IMR-90 (cell line): ENCODE measurements at regions of chr5 and their contacts with region 1.

Region 1: GRCh38 chr5:58460732-58461286 is 923 bp upstream of the PLK2 start:
- DNase-seq: peak; percentile 80
- ATAC-seq: peak; percentile 65
- H3K4me3 ChIP-seq: peak overlapping the region; percentile 85
- H3K27ac ChIP-seq: peak overlapping the region; percentile 77
- H3K4me1 ChIP-seq: no peaks in the 10 kb centered on the region; the same call in none of the 2 replicates
- H3K27me3 ChIP-seq: no peaks in the 10 kb centered on the region
- CTCF ChIP-seq: peak; percentile 88
- POLR2A ChIP-seq: no peak
- RAD21 ChIP-seq: peak; percentile 96

Region 2: DNA sequence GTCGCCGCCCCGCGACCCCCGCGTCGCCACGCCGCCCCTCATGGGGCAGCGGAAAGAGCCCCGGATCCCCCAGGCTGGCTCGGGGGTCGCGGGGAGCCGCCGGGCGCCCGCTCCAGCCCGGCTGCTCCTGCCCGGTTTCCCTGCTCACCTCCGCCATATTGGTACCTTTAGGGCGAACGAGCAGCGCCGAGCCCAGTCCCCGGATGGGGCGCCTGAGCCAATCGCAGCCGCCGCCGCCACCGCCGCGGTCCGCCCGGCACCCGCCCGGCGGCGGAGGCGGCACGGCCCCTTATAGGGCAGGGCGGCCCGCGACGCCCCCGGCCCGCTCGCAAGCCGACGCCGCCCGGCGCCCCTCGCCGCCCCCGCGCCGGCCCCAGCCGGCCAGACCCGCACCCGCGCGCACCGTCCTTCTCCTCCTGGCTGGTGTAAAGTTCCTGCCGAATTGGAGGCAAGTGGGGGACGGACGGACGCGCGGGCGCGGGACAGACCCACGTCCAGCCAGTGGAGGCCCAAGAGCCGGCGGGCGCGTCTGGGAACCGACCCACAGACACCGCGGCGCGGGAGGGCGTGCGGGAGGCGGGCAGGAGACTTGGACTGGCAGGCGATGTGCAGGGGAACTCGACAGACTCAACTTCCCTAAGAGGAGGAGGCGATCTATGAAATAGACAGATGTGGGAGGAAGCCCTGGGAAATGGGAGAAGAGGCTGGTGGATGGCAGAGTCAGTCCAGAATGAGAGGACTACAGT is 1508.7 kb before region 1 on chr5 and contains the start of gene MIER3:
- CTCF ChIA-PET with region 1: no interaction called
- POLR2A ChIA-PET with region 1: no interaction called
- dilution Hi-C with region 1: no loop called
- in situ Hi-C with region 1: no loop called
- intact Hi-C with region 1: loop called (anchors 5 kb)
- DNase-seq: peak; percentile 67
- ATAC-seq: peak; percentile 97
- H3K4me3 ChIP-seq: peak within 1 kb of the TSS; percentile 57
- H3K27ac ChIP-seq: peak within 1 kb of the TSS; percentile 70
- H3K4me1 ChIP-seq: peaks cover 2% of the 10 kb centered on the region; the same call in 1 of the 2 replicates
- H3K27me3 ChIP-seq: peaks cover 8% of the 10 kb centered on the region; the same call in 1 of the 2 replicates
- CTCF ChIP-seq: no peak
- POLR2A ChIP-seq: peak; percentile 76
- RAD21 ChIP-seq: no peak
- total RNA-seq, gene MIER3: 22.9 and 26.7 TPM in 2 replicates

Region 3: DNA sequence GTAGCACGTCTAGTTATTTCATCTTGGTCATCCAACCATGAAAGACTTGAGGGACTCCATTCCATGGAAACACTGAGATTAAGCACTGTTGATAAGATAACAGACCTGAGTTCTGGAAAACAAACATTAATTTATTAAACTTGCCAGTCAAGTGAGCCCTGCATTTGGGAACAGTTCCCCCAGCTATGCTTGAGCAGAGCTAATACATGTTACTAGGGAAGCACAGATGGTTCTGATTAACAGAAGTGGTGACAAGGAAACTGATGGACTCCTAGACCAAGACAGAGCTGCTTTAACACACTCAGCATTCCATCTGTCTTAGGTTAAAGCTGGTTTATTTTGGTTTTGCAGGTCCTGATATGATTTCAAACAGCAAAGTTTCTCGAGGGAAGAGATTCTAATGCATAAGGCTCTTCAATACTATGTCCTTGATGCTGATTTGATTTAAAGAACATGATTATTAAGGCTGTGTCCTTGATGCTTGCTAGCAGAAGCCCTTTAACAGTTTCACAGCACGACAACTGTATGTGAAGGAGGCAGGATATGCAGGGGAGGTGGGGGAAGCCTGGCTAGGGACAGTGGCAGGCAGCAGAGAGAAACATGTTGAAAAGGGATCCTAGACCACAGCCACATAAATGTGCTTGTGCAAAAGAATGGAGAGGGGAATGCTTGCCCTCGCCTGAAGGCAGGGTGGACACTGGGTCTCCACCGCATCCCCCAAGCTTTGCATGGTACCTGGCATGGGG is 1044.4 kb before region 1 on chr5:
- CTCF ChIA-PET with region 1: no interaction called
- POLR2A ChIA-PET with region 1: interaction called, 3 read pairs
- dilution Hi-C with region 1: no loop called
- in situ Hi-C with region 1: loop called (anchors 25 kb)
- intact Hi-C with region 1: no loop called
- DNase-seq: peak; percentile 85
- ATAC-seq: peak; percentile 85
- H3K4me3 ChIP-seq: no peak overlapping the region
- H3K27ac ChIP-seq: peak overlapping the region; percentile 56; the same call in 1 of the 2 replicates
- H3K4me1 ChIP-seq: peaks cover 10% of the 10 kb centered on the region
- H3K27me3 ChIP-seq: no peaks in the 10 kb centered on the region
- CTCF ChIP-seq: no peak
- POLR2A ChIP-seq: no peak
- RAD21 ChIP-seq: no peak

Region 4: GRCh38 chr5:57779383-57780223 is 681.2 kb before region 1 on chr5:
- CTCF ChIA-PET with region 1: interaction called, 27 read pairs
- POLR2A ChIA-PET with region 1: interaction called, 8 read pairs
- dilution Hi-C with region 1: no loop called
- in situ Hi-C with region 1: loop called (anchors 5 kb)
- intact Hi-C with region 1: loop called (anchors 1 kb)
- DNase-seq: peak; percentile 83
- ATAC-seq: peak; percentile 77
- H3K4me3 ChIP-seq: no peak overlapping the region
- H3K27ac ChIP-seq: peak overlapping the region; percentile 58; the same call in 1 of the 2 replicates
- H3K4me1 ChIP-seq: peaks cover 20% of the 10 kb centered on the region
- H3K27me3 ChIP-seq: no peaks in the 10 kb centered on the region
- CTCF ChIP-seq: peak; percentile 81
- POLR2A ChIP-seq: no peak; the same call in 1 of the 2 replicates
- RAD21 ChIP-seq: peak; percentile 92

Region 5: GRCh38 chr5:57834829-57835608 is 625.8 kb before region 1 on chr5:
- CTCF ChIA-PET with region 1: no interaction called
- POLR2A ChIA-PET with region 1: no interaction called
- dilution Hi-C with region 1: no loop called
- in situ Hi-C with region 1: no loop called
- intact Hi-C with region 1: no loop called
- DNase-seq: peak; percentile 59
- ATAC-seq: peak; percentile 88
- H3K4me3 ChIP-seq: no peak overlapping the region
- H3K27ac ChIP-seq: peak overlapping the region; percentile 94
- H3K4me1 ChIP-seq: peaks cover 17% of the 10 kb centered on the region
- H3K27me3 ChIP-seq: no peaks in the 10 kb centered on the region
- CTCF ChIP-seq: no peak
- POLR2A ChIP-seq: no peak
- RAD21 ChIP-seq: no peak

Region 6: DNA sequence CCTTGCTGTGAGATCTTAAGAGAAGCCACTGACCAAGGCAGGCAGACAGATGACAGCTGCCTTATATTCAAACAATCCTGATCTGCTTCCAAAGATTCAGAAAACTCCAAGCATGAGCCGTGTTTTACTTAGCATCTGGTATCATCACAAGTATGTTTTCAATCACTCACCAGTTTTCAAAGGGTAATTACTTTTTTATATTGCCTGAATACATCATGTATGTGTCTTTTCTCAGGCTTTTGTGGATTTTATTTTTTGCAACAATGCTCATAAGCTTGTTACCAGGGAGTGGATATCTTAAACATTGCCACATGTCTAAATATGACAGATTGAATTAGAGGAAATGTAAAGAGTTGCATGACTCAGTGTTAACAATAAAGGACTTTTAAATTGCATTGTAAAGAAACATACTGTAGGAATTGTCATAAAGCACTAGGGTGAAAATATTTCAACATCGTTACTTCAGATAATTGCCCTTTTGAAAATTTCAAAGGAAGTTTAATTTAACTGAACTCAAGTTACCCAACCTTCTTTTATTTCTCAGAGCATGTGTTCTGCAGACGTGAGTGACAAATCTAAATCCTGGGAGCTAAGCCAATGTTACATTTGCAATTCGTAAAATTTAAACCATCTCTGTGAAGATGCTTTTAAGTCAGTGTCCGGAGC is 327.0 kb before region 1 on chr5:
- CTCF ChIA-PET with region 1: no interaction called
- POLR2A ChIA-PET with region 1: no interaction called
- dilution Hi-C with region 1: no loop called
- in situ Hi-C with region 1: no loop called
- intact Hi-C with region 1: loop called (anchors 5 kb)
- DNase-seq: peak; percentile 79
- ATAC-seq: peak; percentile 54
- H3K4me3 ChIP-seq: no peak overlapping the region
- H3K27ac ChIP-seq: no peak overlapping the region
- H3K4me1 ChIP-seq: peaks cover 5% of the 10 kb centered on the region
- H3K27me3 ChIP-seq: no peaks in the 10 kb centered on the region
- CTCF ChIP-seq: no peak
- POLR2A ChIP-seq: no peak
- RAD21 ChIP-seq: no peak

Region 7: DNA sequence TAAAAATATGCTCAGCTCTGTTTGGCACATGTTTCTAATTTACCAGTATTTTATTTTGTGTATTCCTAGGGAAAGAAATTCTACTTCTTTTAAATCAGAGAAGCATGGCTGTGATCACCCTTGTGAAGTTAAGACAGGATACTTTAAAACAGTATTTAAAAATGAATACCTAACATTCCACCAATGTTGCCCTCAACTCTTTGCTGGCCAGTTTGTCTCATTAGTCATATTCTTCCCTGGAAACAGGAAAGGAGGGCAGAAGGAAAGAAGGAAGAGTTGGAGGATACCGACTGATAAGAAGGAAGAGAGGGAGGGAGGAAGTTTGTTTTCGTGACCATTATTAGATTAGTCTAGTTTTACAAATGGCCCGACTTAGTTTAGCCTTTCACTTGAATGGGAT is 138.4 kb before region 1 on chr5:
- CTCF ChIA-PET with region 1: no interaction called
- POLR2A ChIA-PET with region 1: no interaction called
- dilution Hi-C with region 1: no loop called
- in situ Hi-C with region 1: no loop called
- intact Hi-C with region 1: loop called (anchors 5 kb)
- DNase-seq: peak; percentile 36
- ATAC-seq: peak; percentile 83
- H3K4me3 ChIP-seq: no peak overlapping the region
- H3K27ac ChIP-seq: no peak overlapping the region
- H3K4me1 ChIP-seq: peaks cover 2% of the 10 kb centered on the region; the same call in 1 of the 2 replicates
- H3K27me3 ChIP-seq: no peaks in the 10 kb centered on the region
- CTCF ChIP-seq: no peak
- POLR2A ChIP-seq: no peak
- RAD21 ChIP-seq: no peak